Dendritic cell treated with granulocyte-macrophage colony-stimulating factor and Interleukin-4, amounts not matched to agents 40 ng/mL and 50 ng/mL, for 4 days (primary cell): ENCODE measurements at regions of chr1 and their contacts with region 1.

Region 1: GRCh38 chr1:173824331-173825081 is at the starts of genes CENPL and DARS2:
- H3K4me3 Mint-ChIP-seq: peak within 1 kb of the TSS; percentile 97
- H3K27ac Mint-ChIP-seq: peak within 1 kb of the TSS; percentile 99
- H3K4me1 Mint-ChIP-seq: peaks cover 36% of the 10 kb centered on the region
- H3K27me3 Mint-ChIP-seq: no peaks in the 10 kb centered on the region

Region 2: DNA sequence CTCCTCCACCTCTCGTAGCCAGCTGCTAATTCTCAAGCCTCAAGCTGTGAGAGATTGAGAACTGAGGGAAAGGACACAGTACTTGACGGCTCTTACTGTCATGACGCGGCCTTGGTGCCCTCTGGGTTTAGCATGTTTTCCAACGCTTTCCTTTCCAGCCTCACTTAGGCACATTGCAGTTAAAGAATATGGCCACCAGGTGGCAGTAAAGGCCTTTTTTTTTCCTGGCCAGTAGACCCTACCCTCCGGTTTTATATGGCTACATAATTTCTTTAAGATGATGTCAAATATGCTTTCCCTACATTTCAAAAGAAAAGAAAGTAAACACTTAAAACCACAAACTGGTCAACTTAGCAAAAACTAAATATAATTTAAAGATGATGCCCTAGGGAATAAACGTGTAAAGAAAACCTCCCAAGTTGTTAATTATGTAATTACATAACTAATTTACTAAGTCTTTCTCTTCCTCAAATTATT is 404.1 kb before region 1 on chr1:
- intact Hi-C with region 1: loop called (anchors 1 kb)
- H3K4me3 Mint-ChIP-seq: no peak overlapping the region
- H3K27ac Mint-ChIP-seq: no peak overlapping the region
- H3K4me1 Mint-ChIP-seq: peaks cover 62% of the 10 kb centered on the region
- H3K27me3 Mint-ChIP-seq: no peaks in the 10 kb centered on the region

Region 3: DNA sequence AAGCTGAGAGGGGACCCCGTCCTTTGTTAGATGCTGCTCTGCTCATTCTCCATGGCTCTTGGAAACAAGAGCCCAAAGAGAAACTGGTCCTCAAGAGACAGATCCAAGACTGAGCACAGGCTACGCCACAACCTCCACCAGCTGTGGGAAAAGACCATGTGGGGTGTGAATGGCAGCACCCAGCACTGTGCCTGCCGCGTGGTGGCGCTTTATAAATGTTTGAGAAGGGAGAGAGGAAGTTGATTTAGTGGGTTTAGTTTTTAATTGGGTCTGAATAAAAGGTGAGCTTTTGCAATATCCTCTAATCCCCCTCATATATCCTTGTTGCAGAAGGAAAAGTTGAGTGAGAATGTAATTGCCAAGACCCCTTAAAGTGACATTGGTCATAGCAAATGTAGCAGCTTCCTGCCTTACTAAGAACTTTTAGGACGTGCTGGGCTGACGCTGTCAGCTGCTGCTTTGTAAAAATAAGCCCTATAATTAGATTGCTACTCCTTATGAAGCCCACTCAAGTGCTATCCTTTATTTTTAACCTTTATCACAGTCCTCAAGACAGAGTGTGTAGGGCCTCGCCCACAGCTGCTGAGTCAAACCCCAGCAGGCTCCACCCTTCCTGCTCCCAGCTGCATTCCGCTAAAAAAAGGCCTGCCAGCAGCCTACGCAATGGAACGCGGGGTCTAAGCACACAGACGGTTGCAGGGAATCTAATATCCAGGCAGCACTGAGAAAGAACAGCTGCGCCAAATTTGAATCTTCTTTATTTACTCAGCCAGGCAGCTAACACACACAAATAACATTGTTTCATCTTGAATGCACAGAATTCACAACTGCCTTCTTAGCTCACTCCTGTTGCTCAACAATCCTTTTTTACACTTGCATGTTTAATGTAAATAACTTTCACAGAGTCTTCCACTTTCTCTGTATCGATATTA is 394.8 kb before region 1 on chr1:
- intact Hi-C with region 1: loop called (anchors 2 kb)
- H3K4me3 Mint-ChIP-seq: peak overlapping the region; percentile 37
- H3K27ac Mint-ChIP-seq: peak overlapping the region; percentile 91
- H3K4me1 Mint-ChIP-seq: peaks cover 41% of the 10 kb centered on the region
- H3K27me3 Mint-ChIP-seq: no peaks in the 10 kb centered on the region

Region 4: DNA sequence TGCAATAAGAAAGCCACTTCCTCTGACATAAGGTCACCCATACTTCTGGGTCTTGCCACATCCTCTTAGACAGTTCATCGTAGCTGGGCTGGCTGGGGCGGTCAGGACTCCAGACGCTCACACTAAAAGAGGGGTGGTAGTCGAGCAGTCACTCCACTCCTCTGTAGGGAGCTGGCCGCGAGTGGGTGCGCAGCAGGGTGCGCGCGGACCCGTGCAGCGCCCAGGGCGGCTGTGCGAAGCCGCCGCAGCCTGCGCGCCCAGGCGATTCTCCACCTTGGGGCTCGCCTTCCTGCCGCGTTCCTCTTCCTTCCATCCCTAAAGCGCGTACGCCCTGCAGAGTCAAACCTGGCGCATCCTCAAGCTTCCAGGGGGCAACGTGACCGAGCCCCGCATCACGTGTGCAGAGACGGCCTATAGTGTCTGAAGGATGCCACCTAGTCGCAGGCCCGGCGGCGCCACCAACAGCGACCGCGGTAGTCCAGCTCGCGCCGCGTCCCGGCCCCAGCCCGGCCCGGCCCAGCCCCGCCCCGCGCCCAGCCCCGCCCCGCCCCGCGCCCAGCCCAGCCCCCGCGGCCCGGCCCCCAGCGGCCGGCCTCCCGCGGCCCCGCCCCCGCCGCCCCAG is 347.7 kb before region 1 on chr1:
- intact Hi-C with region 1: loop called (anchors 1 kb)
- H3K4me3 Mint-ChIP-seq: peak overlapping the region; percentile 87
- H3K27ac Mint-ChIP-seq: peak overlapping the region; percentile 96
- H3K4me1 Mint-ChIP-seq: peaks cover 53% of the 10 kb centered on the region
- H3K27me3 Mint-ChIP-seq: no peaks in the 10 kb centered on the region

Region 5: GRCh38 chr1:173714759-173715537 is 109.6 kb before region 1 on chr1 and contains the start of gene KLHL20:
- intact Hi-C with region 1: loop called (anchors 5 kb)
- H3K4me3 Mint-ChIP-seq: peak within 1 kb of the TSS; percentile 98
- H3K27ac Mint-ChIP-seq: peak within 1 kb of the TSS; percentile 96
- H3K4me1 Mint-ChIP-seq: peaks cover 6% of the 10 kb centered on the region
- H3K27me3 Mint-ChIP-seq: peaks cover 20% of the 10 kb centered on the region

Region 6: GRCh38 chr1:173758980-173759609 is 65.4 kb before region 1 on chr1:
- intact Hi-C with region 1: no loop called
- H3K4me3 Mint-ChIP-seq: no peak overlapping the region
- H3K27ac Mint-ChIP-seq: no peak overlapping the region
- H3K4me1 Mint-ChIP-seq: no peaks in the 10 kb centered on the region
- H3K27me3 Mint-ChIP-seq: no peaks in the 10 kb centered on the region

Region 7: GRCh38 chr1:173867753-173868265 is 43.3 kb after region 1 on chr1 and contains the start of gene GAS5:
- intact Hi-C with region 1: loop called (anchors 1 kb)
- H3K4me3 Mint-ChIP-seq: peak within 1 kb of the TSS; percentile 98
- H3K27ac Mint-ChIP-seq: peak within 1 kb of the TSS; percentile 91
- H3K4me1 Mint-ChIP-seq: peaks cover 50% of the 10 kb centered on the region
- H3K27me3 Mint-ChIP-seq: no peaks in the 10 kb centered on the region

Region 8: DNA sequence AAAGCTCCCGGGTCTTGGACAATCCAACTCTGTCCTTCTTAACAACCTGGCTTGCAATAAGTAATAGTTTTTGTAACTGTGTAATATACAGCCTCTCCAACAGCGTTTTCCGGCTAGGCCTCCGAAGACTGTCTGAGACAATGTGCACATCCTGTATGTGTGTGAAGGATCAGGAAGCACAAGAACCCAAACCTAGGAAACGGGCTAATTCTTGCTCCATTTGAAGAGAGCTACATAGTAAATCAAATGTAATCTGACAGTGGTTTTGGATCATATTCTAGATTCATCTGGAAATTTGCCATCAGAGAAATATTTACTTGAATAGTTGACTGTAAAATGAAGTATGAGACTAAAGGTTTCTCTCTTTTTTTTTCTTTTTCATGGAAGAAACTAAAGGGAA is 624.5 kb after region 1 on chr1:
- intact Hi-C with region 1: no loop called
- H3K4me3 Mint-ChIP-seq: no peak overlapping the region
- H3K27ac Mint-ChIP-seq: no peak overlapping the region
- H3K4me1 Mint-ChIP-seq: no peaks in the 10 kb centered on the region
- H3K27me3 Mint-ChIP-seq: no peaks in the 10 kb centered on the region